ENCODE measurements at regions of chr12 and their contacts with region 1.

Region 1: GRCh38 chr12:114999812-115000437 is 315.9 kb upstream of the TBX3 start:
- DNase-seq: peak; percentile 100
- ATAC-seq: peak; percentile 74
- H3K4me3 ChIP-seq: no peak overlapping the region
- H3K27ac ChIP-seq: peak overlapping the region; percentile 92
- H3K4me1 ChIP-seq: peaks cover 39% of the 10 kb centered on the region
- H3K27me3 ChIP-seq: no peaks in the 10 kb centered on the region
- CTCF ChIP-seq: no peak

Region 2: DNA sequence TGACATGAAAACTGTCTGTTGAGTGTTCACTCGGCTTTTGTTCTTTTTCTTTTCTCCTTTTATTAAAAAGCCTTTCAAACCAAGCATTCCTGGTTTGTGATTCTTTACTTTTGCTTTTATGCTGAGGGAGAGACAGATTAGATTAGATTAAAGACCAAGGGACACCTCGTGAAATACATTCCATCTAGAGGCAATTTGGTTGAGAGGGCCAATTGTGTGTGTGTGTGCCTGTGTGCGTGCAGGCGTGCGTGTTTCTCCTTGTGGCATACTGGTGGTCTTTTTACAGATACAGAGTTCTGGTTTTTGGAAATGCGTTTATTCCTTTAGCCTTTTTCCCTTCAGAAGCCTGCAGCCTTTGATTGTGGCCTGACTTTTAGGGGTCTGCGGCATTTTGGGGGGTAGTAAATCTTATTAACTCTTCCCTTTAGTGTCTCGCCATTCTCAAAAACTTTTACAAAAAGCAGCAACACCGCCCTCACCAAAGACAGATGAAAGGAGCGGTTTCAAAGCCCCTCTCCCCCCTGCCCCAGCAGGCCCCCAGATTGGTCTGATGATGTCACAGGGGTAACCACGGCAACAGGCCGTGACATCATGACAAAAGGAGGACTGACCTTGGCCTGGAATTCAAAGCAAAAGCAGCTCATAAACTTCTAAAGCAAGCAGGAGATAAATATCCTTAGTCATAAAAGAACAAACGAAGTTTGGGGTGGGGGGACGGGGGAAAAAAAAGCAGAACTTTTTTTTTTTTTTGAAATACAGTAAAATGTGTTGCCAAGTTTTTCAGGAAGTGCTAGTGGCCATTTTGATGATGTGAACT is 231.8 kb before region 1 on chr12:
- CTCF ChIA-PET with region 1: no interaction called
- POLR2A ChIA-PET with region 1: no interaction called
- intact Hi-C with region 1: loop called (anchors 5 kb)
- DNase-seq: peak; percentile 66
- ATAC-seq: peak; percentile 70
- H3K4me3 ChIP-seq: no peak overlapping the region
- H3K27ac ChIP-seq: peak overlapping the region; percentile 40
- H3K4me1 ChIP-seq: peaks cover 10% of the 10 kb centered on the region
- H3K27me3 ChIP-seq: no peaks in the 10 kb centered on the region
- CTCF ChIP-seq: no peak

Region 3: DNA sequence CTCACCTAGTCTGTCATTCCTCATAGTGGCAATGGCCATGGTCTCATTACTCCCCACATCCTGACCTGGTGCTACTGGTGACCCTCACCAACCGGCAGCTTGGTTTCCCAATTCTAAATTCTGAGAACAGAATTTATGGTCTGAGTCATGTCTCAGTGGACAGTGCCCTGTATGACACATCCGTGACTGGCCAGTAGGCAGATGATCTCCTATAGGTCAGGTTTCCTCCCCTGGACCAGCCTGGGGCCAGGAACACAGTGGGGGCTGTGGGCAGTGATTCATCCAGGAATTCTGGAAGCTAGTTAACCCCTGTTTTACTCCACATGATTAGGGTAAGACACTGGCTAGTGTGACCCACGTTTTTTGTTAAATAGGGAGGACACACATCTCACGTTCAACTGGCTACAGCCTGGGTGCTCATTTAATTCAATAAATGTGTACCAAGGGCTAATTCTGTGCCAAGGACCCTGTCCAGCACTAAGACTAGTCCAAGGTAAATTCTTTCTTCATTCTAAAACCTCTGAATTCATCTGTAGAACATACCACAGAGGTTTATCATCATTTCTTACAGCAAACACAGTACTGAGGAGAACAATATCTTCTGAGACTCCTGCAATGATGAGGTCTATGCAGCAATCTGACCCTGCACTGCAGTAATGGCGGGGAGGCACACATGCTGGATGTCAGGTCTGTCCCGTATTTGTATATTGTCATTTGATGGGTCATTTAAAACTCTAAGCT is 66.3 kb before region 1 on chr12:
- CTCF ChIA-PET with region 1: no interaction called
- POLR2A ChIA-PET with region 1: no interaction called
- intact Hi-C with region 1: loop called (anchors 1 kb)
- DNase-seq: peak; percentile 98
- ATAC-seq: peak; percentile 96
- H3K4me3 ChIP-seq: peak overlapping the region; percentile 14; the same call in 1 of the 2 replicates
- H3K27ac ChIP-seq: peak overlapping the region; percentile 91
- H3K4me1 ChIP-seq: peaks cover 28% of the 10 kb centered on the region
- H3K27me3 ChIP-seq: no peaks in the 10 kb centered on the region
- CTCF ChIP-seq: no peak

Region 4: GRCh38 chr12:115313929-115314328 is 314.0 kb after region 1 on chr12:
- CTCF ChIA-PET with region 1: no interaction called
- POLR2A ChIA-PET with region 1: no interaction called
- intact Hi-C with region 1: loop called (anchors 5 kb)
- DNase-seq: peak; percentile 97
- ATAC-seq: peak; percentile 87
- H3K4me3 ChIP-seq: no peak overlapping the region
- H3K27ac ChIP-seq: peak overlapping the region; percentile 58
- H3K4me1 ChIP-seq: peaks cover 37% of the 10 kb centered on the region
- H3K27me3 ChIP-seq: no peaks in the 10 kb centered on the region
- CTCF ChIP-seq: no peak

Region 5: DNA sequence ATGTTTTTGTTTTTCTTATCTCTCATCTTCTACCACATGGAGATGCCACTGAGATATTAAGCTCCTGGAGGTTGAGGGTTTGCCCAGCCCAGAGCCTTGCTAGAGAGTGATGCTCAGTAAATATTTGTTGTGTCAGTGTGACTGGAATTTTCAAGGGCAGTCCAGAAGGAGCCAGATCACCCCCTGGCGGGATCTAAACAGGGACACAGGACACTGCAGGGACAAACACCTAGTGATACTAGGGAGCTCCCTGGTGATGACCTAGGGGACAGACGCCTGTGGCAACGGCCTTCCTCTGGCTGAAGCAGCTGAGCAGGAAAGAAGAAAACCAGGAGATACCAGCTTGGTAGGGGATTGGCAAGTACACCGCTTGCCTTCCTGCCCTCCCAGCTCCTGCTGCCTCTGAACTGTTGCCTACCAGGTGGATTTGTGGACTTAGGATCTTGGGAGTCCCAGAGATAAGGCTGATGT is 398.4 kb after region 1 on chr12:
- CTCF ChIA-PET with region 1: no interaction called
- POLR2A ChIA-PET with region 1: no interaction called
- intact Hi-C with region 1: loop called (anchors 5 kb)
- DNase-seq: peak; percentile 86
- ATAC-seq: peak; percentile 97
- H3K4me3 ChIP-seq: no peak overlapping the region
- H3K27ac ChIP-seq: no peak overlapping the region
- H3K4me1 ChIP-seq: peaks cover 22% of the 10 kb centered on the region; the same call in 1 of the 2 replicates
- H3K27me3 ChIP-seq: no peaks in the 10 kb centered on the region
- CTCF ChIP-seq: peak; percentile 96

Measured in PC-3 (cell line).